AG04450 (cell line): ENCODE measurements at regions of chr6 and their contacts with region 1.

Region 1: DNA sequence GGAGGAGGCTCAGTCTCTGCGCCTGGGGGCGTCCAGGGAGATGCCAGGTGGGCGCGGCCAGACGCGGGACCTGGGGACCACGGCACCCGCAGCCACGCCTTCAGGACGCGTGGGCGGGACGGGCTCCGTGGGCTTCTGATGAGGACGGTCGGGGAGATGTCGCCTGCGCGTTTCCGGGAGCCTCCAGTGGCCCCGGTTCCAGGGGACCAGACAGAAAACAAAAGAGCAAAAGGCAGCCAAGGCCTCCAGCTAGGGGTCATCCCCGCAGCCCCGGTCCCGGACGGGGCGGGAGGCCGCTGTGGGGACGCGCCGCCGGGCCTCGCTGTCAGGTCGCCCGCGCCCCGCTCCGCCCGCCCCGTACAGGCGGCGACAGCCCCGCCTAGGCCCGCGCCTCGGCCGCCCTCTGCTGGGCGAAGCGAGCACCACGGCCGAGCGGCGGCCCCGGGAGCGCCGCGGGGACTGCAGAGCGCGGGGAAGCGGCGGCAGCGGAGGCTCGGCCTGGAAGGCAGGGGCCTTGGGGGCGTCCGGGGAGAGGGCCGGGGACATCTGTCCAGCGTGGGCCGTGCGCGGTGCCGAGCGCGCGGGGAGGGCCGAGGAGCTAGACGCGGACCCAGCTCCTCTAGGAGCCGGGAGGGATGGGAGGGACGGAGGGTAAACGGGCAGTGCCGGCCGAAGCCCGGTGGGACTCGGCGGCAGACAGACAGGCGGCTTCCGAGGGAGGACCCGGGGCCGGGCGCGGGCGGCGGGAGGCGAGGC is 48.7 kb downstream of the TMEM242 start:
- DNase-seq: no peak
- H3K4me3 ChIP-seq: peak overlapping the region; percentile 68
- H3K27ac ChIP-seq: no peak overlapping the region
- H3K27me3 ChIP-seq: no peaks in the 10 kb centered on the region
- CTCF ChIP-seq: peak; percentile 44

Region 2: GRCh38 chr6:157287943-157288342 is 13.3 kb after region 1 on chr6:
- CTCF ChIA-PET with region 1: interaction called, 10 read pairs
- POLR2A ChIA-PET with region 1: interaction called, 3 read pairs
- DNase-seq: no peak
- H3K4me3 ChIP-seq: no peak overlapping the region
- H3K27ac ChIP-seq: no peak overlapping the region
- H3K27me3 ChIP-seq: no peaks in the 10 kb centered on the region
- CTCF ChIP-seq: no peak

Region 3: GRCh38 chr6:157309321-157309720 is 34.7 kb after region 1 on chr6:
- CTCF ChIA-PET with region 1: no interaction called
- POLR2A ChIA-PET with region 1: no interaction called
- DNase-seq: no peak
- H3K4me3 ChIP-seq: no peak overlapping the region
- H3K27ac ChIP-seq: no peak overlapping the region
- H3K27me3 ChIP-seq: no peaks in the 10 kb centered on the region
- CTCF ChIP-seq: no peak